ENCODE measurements at regions of chr17 and their contacts with region 1.

Region 1: GRCh38 chr17:28318759-28319660 is at the start of gene TMEM97:
- DNase-seq: peak; percentile 93
- H3K4me3 ChIP-seq: peak within 1 kb of the TSS; percentile 75
- H3K27ac ChIP-seq: no peak within 1 kb of the TSS
- H3K4me1 ChIP-seq: peaks cover 34% of the 10 kb centered on the region
- H3K27me3 ChIP-seq: no peaks in the 10 kb centered on the region
- CTCF ChIP-seq: 0 out of 2 replicates have a peak, but pooled peaks have one; percentile 34
- total RNA-seq, gene TMEM97: 28.8 and 46.4 TPM in 2 replicates

Region 2: GRCh38 chr17:28282596-28282995 is 36.4 kb before region 1 on chr17:
- CTCF ChIA-PET with region 1: no interaction called
- POLR2A ChIA-PET with region 1: interaction called, 3 read pairs
- intact Hi-C with region 1: loop called (anchors 5 kb)
- DNase-seq: peak; percentile 25 to 47
- H3K4me3 ChIP-seq: no peak overlapping the region
- H3K27ac ChIP-seq: no peak overlapping the region
- H3K4me1 ChIP-seq: peaks cover 30% of the 10 kb centered on the region
- H3K27me3 ChIP-seq: no peaks in the 10 kb centered on the region
- CTCF ChIP-seq: no peak

Region 3: DNA sequence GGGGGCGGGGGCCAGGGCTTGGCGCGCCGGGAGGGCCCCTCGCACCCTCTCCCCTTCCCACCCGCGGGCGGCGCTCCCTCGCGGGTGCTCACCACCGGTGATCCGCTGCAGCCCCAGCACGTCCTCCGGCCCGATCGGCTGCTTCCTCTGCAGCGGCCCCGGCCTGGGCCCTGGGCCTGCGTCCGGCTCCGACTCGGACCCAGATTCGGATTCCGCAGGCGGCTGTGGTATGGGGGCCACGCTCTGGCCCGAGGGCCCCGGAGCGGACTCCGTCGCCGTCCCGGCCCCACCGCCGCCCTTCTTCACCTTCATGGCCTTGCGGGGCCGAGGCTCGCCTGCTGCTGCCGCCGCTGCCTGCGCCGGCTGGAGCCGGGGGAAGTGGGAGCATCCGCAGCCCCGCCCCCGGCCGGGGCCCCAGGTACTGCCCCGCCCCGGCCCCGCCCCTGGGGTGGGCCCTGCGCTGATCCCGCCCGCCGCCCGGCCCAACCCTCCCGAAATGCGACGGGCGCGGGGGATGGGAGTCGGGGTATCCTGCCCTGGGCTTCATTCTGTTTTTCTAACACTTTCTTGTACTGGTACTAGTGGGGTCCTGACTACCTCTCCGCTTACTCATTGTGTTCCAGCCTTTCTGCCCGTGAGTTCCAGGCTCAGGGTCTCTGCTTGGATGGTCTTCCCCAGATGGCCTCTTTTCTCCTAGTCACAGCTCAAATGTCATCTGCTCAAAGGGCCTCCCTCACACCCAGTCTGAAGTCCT is 233.4 kb after region 1 on chr17 and contains the start of gene UNC119:
- CTCF ChIA-PET with region 1: no interaction called
- POLR2A ChIA-PET with region 1: no interaction called
- intact Hi-C with region 1: no loop called
- DNase-seq: peak in 1 of 2 experiments; percentile 78
- H3K4me3 ChIP-seq: peak within 1 kb of the TSS; percentile 74
- H3K27ac ChIP-seq: no peak within 1 kb of the TSS
- H3K4me1 ChIP-seq: peaks cover 7% of the 10 kb centered on the region; the same call in 1 of the 2 replicates
- H3K27me3 ChIP-seq: no peaks in the 10 kb centered on the region
- CTCF ChIP-seq: no peak
- total RNA-seq, gene UNC119: 39.7 and 48.8 TPM in 2 replicates

Measured in PC-9 (cell line).